T-cell (primary cell): ENCODE measurements at regions of chr11 and their contacts with region 1.

Region 1: DNA sequence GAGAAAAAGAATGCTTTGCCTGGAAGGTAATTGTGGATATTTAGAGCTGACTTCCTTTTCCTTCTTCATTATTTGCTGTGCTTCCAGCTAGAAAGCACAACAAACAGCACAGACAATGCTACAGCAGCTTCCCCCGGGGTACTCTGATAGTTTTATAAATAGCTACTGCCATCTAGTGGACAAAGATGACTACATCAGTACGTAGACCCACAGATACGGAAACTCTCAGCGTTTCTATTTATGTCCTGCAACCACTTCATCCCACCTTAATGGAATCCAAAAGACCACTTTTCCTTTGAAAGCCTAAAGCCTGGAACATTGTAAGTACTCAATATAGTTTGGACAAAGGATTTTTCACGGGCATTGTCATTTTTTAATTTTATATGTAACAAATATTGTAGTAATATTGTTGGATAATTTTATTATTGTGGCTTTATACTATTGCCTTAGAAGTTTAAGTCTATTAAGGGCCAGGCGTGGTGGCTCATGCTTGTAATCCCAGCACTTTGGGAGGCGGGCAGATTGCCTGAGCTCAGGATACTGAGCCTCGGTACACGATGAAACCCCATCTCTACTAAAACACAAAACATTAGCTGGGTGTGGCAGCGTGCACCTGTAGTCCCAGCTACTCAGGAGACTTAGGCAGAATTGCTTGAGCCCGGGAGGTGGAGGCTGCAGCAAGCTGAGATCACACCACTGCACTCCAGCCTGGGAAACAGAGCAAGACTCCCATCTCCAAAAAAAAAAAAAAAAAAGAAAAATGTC is 7.5 kb downstream of the HSPA8 start:
- DNase-seq: peak in 8 of 35 experiments; percentile 11 to 83 (median 22)
- ATAC-seq: peak; percentile 74 to 83 (median 78)
- H3K4me3 ChIP-seq: no peak overlapping the region
- H3K4me3 Mint-ChIP-seq: peak overlapping the region in 2 of 3 donors; percentile 28 to 99
- H3K27ac ChIP-seq: peak overlapping the region; percentile 44
- H3K27ac Mint-ChIP-seq: peak overlapping the region; percentile 100
- H3K4me1 ChIP-seq: peaks cover 39 to 50% of the 10 kb centered on the region in 2 experiments
- H3K4me1 Mint-ChIP-seq: peaks cover 52 to 56% (median 55%) of the 10 kb centered on the region in 3 donors
- H3K27me3 ChIP-seq: no peaks in the 10 kb centered on the region
- H3K27me3 Mint-ChIP-seq: no peaks in the 10 kb centered on the region

Region 2: DNA sequence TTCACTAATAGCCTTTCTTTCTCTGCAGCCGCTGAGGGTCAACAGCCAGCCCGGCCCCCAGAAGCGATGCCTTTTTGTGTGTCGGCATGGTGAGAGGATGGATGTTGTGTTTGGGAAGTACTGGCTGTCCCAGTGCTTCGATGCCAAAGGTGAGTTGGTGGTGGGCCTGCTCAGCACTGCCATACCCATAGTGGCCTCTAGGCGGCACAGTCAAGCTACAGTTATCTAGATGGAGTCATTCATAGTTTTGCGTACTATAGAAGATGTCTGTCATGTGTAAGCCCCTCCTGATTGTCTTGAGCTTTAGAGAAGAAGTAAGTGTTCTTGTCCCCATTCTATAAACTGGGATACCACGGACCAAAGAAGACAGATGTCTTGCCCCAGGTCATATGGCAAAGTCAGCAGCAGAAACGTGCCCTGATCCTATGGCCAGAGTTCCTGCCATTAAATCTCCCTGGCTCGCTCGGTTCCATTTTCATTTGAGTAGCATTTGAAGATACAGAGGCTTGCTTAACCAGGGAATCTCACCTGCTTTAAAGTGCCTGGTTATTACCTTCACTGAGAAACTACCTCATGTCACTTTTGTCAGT is 258.3 kb before region 1 on chr11:
- CTCF ChIA-PET with region 1: interaction called, 5 to 13 read pairs
- POLR2A ChIA-PET with region 1: no interaction called
- DNase-seq: peak; percentile 12 to 80 (median 64)
- ATAC-seq: peak; percentile 81 to 86 (median 84)
- H3K4me3 ChIP-seq: no peak overlapping the region
- H3K4me3 Mint-ChIP-seq: no peak overlapping the region
- H3K27ac ChIP-seq: no peak overlapping the region
- H3K27ac Mint-ChIP-seq: no peak overlapping the region
- H3K4me1 ChIP-seq: peaks cover 0 to 2% of the 10 kb centered on the region in 2 experiments
- H3K4me1 Mint-ChIP-seq: peaks cover 0 to 8% (median 0%) of the 10 kb centered on the region in 3 donors
- H3K27me3 ChIP-seq: no peaks in the 10 kb centered on the region
- H3K27me3 Mint-ChIP-seq: no peaks in the 10 kb centered on the region

Region 3: DNA sequence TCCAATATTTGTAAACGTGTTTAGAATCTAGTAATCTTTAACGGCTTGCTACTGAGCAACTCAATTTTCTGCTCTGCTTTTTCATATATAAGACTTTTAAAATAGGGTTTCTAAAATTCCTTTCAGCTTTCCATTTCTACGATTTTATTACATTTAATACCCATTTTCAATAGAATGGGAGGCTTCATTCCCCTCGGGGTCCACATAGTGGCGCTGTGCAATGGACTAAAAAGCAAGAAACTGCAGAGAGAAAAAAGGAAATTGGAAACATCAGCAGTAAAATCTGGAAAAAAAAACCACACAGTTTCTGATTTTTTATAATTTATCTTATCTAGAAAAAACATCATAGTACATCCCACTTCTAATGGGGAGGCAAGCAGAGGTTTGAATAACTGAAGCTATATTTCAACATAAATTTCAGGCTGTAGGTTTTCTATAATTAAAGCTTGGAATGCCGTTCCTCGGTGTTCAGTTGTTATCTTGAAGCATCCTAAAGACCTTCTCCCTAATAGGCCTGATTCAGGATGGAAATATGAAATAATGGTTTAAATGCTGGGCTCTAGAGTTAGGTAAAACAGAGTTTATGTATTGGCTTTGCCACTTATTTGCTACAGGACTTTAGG is 190.7 kb before region 1 on chr11:
- CTCF ChIA-PET with region 1: interaction called, 8 to 26 read pairs
- POLR2A ChIA-PET with region 1: interaction called, 5 to 8 read pairs
- DNase-seq: peak in 21 of 35 experiments; percentile 10 to 61 (median 34)
- ATAC-seq: no peak
- H3K4me3 ChIP-seq: no peak overlapping the region
- H3K4me3 Mint-ChIP-seq: no peak overlapping the region
- H3K27ac ChIP-seq: no peak overlapping the region
- H3K27ac Mint-ChIP-seq: no peak overlapping the region
- H3K4me1 ChIP-seq: no peaks in the 10 kb centered on the region
- H3K4me1 Mint-ChIP-seq: no peaks in the 10 kb centered on the region
- H3K27me3 ChIP-seq: no peaks in the 10 kb centered on the region
- H3K27me3 Mint-ChIP-seq: peaks cover 0 to 7% of the 10 kb centered on the region in 2 donors

Region 4: DNA sequence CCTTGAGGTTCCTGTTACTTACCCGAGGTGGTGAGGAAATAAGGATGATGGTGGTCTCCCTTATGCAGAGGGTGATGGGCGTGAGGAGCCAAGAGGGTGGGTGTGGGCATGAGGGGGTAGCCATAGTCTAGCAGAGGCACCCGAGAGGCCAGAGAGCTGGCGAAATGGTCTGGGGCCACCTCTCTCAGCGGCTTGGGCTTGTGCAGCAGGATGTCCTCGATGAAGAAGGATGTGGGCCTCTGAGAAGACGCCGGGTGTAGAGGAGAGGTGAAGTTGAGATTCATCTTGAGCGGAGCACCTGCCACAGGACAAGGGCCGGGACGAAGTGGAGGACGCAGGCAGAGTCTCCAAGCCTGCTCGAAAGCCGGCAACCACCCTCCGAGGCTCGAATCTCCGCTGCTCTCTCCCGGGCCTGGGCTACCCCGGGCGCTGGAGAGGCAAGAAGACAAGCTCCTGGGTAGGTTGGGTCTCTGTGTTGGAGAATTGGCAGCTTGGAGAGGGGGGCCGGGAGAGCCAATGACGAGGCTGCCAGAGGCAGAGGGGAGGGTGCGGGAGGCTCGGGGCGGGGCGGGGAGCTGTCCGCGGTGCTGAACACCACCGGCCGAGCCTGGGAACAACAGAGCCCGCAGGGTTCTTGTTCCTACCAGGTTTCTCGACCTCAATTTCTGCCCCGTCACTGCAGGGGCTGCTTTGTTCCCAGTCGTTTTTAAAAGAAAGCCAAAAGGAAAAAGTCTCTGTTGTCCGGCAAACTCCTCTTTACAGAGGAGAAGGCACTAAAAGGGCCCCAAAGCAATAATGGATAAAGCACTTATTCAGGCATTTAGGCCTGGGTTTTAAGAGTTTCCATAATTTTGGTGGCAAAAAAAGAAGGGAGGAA is 72.9 kb before region 1 on chr11 and contains the start of gene BSX:
- CTCF ChIA-PET with region 1: no interaction called
- POLR2A ChIA-PET with region 1: no interaction called
- DNase-seq: peak in 30 of 35 experiments; percentile 6 to 67 (median 42)
- ATAC-seq: peak in 3 of 4 experiments; percentile 44 to 67 (median 58)
- H3K4me3 ChIP-seq: peak within 1 kb of the TSS in 1 of 2 donors; percentile 18
- H3K4me3 Mint-ChIP-seq: peak within 1 kb of the TSS in 1 of 3 donors; percentile 77
- H3K27ac ChIP-seq: no peak within 1 kb of the TSS
- H3K27ac Mint-ChIP-seq: no peak within 1 kb of the TSS
- H3K4me1 ChIP-seq: peaks cover 0 to 43% of the 10 kb centered on the region in 2 experiments
- H3K4me1 Mint-ChIP-seq: peaks cover 43 to 52% (median 45%) of the 10 kb centered on the region in 3 donors
- H3K27me3 ChIP-seq: peaks cover 30 to 76% of the 10 kb centered on the region in 2 experiments
- H3K27me3 Mint-ChIP-seq: peaks cover 74 to 88% of the 10 kb centered on the region in 2 donors
- total RNA-seq, gene BSX: not detected

Region 5: GRCh38 chr11:123033895-123034294 is 20.6 kb before region 1 on chr11:
- CTCF ChIA-PET with region 1: interaction called, 5 to 10 read pairs
- POLR2A ChIA-PET with region 1: interaction called, 3 to 4 read pairs
- DNase-seq: peak in 1 of 35 experiments; percentile 22
- ATAC-seq: no peak
- H3K4me3 ChIP-seq: no peak overlapping the region
- H3K4me3 Mint-ChIP-seq: no peak overlapping the region
- H3K27ac ChIP-seq: no peak overlapping the region
- H3K27ac Mint-ChIP-seq: no peak overlapping the region
- H3K4me1 ChIP-seq: no peaks in the 10 kb centered on the region
- H3K4me1 Mint-ChIP-seq: no peaks in the 10 kb centered on the region
- H3K27me3 ChIP-seq: peaks cover 0 to 10% of the 10 kb centered on the region in 2 experiments
- H3K27me3 Mint-ChIP-seq: no peaks in the 10 kb centered on the region

Region 6: DNA sequence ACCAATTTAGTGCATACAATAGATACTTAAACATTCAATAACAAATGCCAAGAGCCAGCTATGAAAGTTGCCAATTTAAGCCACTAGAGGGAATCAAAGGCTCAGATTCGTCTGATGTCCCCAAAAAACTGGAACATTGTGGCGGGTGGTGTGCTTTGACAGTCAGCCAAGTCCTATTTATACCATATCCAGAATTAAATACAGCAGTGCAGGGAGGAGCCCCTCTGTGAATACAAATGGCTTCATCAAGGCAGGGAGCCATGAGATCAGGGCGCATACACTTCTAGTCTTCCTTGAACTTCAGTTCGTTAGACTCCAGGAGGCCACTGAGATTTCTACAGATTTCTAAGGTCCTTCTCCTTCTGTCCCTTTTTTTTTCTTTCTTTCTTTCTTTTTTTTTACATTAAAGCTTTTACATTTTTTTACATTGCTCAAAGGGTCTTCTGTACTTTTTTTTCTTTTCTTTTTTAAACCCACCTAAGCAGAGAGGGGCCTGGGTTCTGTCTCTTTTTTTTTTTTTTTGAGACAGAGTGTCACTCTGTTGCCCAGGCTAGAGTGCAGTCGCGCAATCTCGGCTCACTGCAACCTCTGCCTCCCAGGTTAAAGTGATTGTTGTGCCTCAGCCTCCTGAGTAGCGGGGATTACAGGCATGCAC is 49.0 kb after region 1 on chr11:
- CTCF ChIA-PET with region 1: interaction called, 15 to 20 read pairs
- POLR2A ChIA-PET with region 1: interaction called, 3 to 4 read pairs
- DNase-seq: peak in 29 of 35 experiments; percentile 2 to 67 (median 15)
- ATAC-seq: peak; percentile 60 to 81 (median 78)
- H3K4me3 ChIP-seq: no peak overlapping the region
- H3K4me3 Mint-ChIP-seq: no peak overlapping the region
- H3K27ac ChIP-seq: no peak overlapping the region
- H3K27ac Mint-ChIP-seq: peak overlapping the region; percentile 54 to 64
- H3K4me1 ChIP-seq: peaks cover 3 to 19% of the 10 kb centered on the region in 2 experiments
- H3K4me1 Mint-ChIP-seq: peaks cover 25 to 42% (median 31%) of the 10 kb centered on the region in 3 donors
- H3K27me3 ChIP-seq: peaks cover 0 to 6% of the 10 kb centered on the region in 2 experiments
- H3K27me3 Mint-ChIP-seq: no peaks in the 10 kb centered on the region

Region 7: DNA sequence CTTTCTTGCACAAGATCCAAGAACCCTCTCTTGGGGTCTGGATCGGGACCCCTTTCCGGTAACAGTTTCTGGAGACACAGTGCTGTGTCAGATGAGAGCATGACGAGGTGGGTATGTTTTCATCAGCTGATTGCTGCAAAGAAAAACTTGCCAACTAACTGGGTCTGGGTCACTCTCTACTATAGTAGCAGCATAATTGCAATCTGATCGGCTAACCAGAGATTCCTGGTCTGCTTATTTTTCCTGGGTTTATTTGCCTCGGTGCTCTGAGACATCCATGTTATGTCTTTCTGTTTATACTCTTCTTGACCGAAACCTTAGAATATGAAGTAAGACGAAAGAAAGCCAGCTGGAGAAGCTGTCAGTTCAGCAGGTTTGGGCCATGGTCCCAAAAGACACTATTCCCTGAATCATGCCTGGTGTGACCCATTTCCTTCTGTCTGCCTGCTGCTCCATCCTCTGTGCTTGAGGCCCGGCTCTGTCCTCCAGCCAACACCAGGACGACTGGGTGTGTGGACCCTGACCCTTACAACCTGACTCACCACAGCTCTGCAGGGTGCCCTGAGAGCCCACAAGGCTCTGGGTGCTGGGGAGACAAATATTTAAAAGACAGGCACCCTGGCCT is 164.7 kb after region 1 on chr11:
- CTCF ChIA-PET with region 1: no interaction called
- POLR2A ChIA-PET with region 1: no interaction called
- DNase-seq: no peak
- ATAC-seq: no peak
- H3K4me3 ChIP-seq: no peak overlapping the region
- H3K4me3 Mint-ChIP-seq: no peak overlapping the region
- H3K27ac ChIP-seq: no peak overlapping the region
- H3K27ac Mint-ChIP-seq: no peak overlapping the region
- H3K4me1 ChIP-seq: no peaks in the 10 kb centered on the region
- H3K4me1 Mint-ChIP-seq: no peaks in the 10 kb centered on the region
- H3K27me3 ChIP-seq: peaks cover 0 to 8% of the 10 kb centered on the region in 2 experiments
- H3K27me3 Mint-ChIP-seq: peaks cover 12 to 17% of the 10 kb centered on the region in 2 donors

Region 8: DNA sequence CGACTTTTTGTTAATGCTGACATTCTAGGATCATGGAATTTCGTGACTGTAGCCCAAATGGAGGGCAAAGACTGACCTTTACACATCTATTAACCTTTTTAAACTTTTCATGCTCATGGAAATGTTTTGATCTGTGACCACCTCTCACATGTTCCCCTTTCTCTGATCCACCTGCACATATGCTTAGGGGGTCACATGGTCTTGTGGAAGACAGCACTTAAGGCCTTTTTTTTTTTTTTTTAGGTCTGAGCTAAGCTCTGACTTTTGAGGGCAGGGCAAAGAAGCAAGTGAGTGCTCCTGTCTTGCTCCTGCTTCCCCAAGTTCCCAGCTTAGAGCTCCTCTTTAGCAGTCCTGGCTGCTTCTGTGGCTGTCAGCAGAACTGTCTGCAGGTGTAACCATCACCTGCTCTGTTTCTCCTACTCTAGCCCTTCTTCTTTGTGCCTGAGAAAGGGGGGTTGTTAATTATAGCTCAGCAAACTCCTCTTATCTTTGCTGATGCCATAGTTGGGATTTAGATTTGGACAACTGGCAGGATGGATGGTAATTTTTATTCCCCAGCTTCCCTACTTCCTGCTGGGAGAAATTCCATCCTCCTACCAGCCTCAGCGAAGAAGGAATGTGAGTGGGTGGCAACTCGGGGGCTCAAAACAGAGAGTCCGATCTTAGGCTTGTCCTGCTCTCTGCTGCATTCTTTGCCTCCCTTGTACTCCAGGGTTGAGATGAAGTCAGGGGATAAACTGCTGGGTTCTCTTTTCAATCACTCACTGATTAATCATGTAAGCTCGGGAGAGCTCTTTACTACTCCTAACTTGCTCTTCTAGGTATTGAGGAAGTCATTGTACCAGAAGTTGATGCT is 439.9 kb after region 1 on chr11:
- CTCF ChIA-PET with region 1: no interaction called
- POLR2A ChIA-PET with region 1: no interaction called
- DNase-seq: no peak
- ATAC-seq: no peak
- H3K4me3 ChIP-seq: no peak overlapping the region
- H3K4me3 Mint-ChIP-seq: no peak overlapping the region
- H3K27ac ChIP-seq: no peak overlapping the region
- H3K27ac Mint-ChIP-seq: no peak overlapping the region
- H3K4me1 ChIP-seq: no peaks in the 10 kb centered on the region
- H3K4me1 Mint-ChIP-seq: no peaks in the 10 kb centered on the region
- H3K27me3 ChIP-seq: no peaks in the 10 kb centered on the region
- H3K27me3 Mint-ChIP-seq: no peaks in the 10 kb centered on the region

Region 9: GRCh38 chr11:123741159-123742028 is 686.9 kb after region 1 on chr11 and contains the start of gene ZNF202:
- CTCF ChIA-PET with region 1: interaction called in 1 of 2 experiments, 4 read pairs
- POLR2A ChIA-PET with region 1: interaction called, 4 to 18 read pairs
- DNase-seq: peak; percentile 81 to 94 (median 90)
- ATAC-seq: peak; percentile 94 to 96 (median 95)
- H3K4me3 ChIP-seq: peak within 1 kb of the TSS; percentile 73 to 94
- H3K4me3 Mint-ChIP-seq: peak within 1 kb of the TSS; percentile 87 to 94 (median 92)
- H3K27ac ChIP-seq: peak within 1 kb of the TSS; percentile 61
- H3K27ac Mint-ChIP-seq: peak within 1 kb of the TSS; percentile 94 to 96
- H3K4me1 ChIP-seq: peaks cover 14 to 22% of the 10 kb centered on the region in 2 experiments
- H3K4me1 Mint-ChIP-seq: peaks cover 41 to 51% (median 48%) of the 10 kb centered on the region in 3 donors
- H3K27me3 ChIP-seq: peaks cover 0 to 2% of the 10 kb centered on the region in 2 experiments
- H3K27me3 Mint-ChIP-seq: peaks cover 3% of the 10 kb centered on the region in 2 donors
- total RNA-seq, gene ZNF202: 9.5 to 22.6 (median 21.7) TPM